Caco-2 (cell line): ENCODE measurements at regions of chr2 and their contacts with region 1.

Region 1: DNA sequence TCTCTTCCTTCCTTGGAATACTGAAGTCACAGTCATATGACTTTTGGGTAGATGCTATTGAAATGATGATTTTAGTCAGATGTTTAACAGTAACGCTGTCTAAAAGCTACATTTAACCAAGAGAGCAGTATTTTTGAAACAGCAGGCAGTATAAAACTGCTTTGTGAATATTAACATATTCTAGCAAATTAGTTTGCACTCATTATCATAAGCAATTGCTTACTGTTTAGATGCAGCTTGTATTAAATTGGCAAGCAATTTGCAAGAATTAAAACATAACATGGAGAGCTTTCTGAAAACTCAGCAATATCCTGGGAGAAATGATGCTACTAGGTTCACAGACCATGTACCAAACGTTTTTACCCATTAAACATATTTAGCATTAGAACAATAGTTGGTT is 776.0 kb downstream of the NRXN1 start:
- DNase-seq: no peak
- H3K4me3 ChIP-seq: no peak overlapping the region
- H3K4me3 Mint-ChIP-seq: no peak overlapping the region
- H3K27ac Mint-ChIP-seq: no peak overlapping the region
- H3K4me1 ChIP-seq: no peaks in the 10 kb centered on the region
- H3K4me1 Mint-ChIP-seq: no peaks in the 10 kb centered on the region
- H3K27me3 ChIP-seq: no peaks in the 10 kb centered on the region
- H3K27me3 Mint-ChIP-seq: peaks cover 2% of the 10 kb centered on the region
- CTCF ChIP-seq: no peak

Region 2: GRCh38 chr2:50225021-50225928 is 30.7 kb before region 1 on chr2:
- CTCF ChIA-PET with region 1: no interaction called
- POLR2A ChIA-PET with region 1: no interaction called
- intact Hi-C with region 1: loop called (anchors 1 kb)
- DNase-seq: no peak
- H3K4me3 ChIP-seq: no peak overlapping the region
- H3K4me3 Mint-ChIP-seq: no peak overlapping the region
- H3K27ac Mint-ChIP-seq: no peak overlapping the region
- H3K4me1 ChIP-seq: no peaks in the 10 kb centered on the region
- H3K4me1 Mint-ChIP-seq: no peaks in the 10 kb centered on the region
- H3K27me3 ChIP-seq: no peaks in the 10 kb centered on the region
- H3K27me3 Mint-ChIP-seq: peaks cover 5% of the 10 kb centered on the region
- CTCF ChIP-seq: no peak

Region 3: DNA sequence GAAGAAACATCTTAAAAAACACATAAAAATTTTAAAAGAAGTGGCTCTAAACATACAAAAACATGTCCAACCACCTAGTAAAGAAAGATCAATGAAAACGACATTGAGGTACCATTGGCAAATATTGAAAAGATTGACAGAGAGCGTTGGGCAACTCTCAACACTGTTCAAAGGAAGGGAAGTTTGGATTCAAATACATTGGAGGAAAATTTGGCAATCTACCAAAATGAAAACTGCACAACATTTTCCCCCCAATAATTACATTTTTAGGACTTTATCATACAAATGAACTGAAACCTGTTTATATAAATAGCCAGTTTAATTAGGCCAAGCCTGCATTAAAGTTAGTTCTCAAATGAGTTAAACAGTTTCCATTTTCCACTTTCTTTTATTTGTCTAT is 17.1 kb after region 1 on chr2:
- CTCF ChIA-PET with region 1: no interaction called
- POLR2A ChIA-PET with region 1: no interaction called
- intact Hi-C with region 1: no loop called
- DNase-seq: no peak
- H3K4me3 ChIP-seq: no peak overlapping the region
- H3K4me3 Mint-ChIP-seq: no peak overlapping the region
- H3K27ac Mint-ChIP-seq: no peak overlapping the region
- H3K4me1 ChIP-seq: no peaks in the 10 kb centered on the region
- H3K4me1 Mint-ChIP-seq: no peaks in the 10 kb centered on the region
- H3K27me3 ChIP-seq: no peaks in the 10 kb centered on the region
- H3K27me3 Mint-ChIP-seq: peaks cover 2% of the 10 kb centered on the region
- CTCF ChIP-seq: no peak